ENCODE measurements at regions of chr16 and their contacts with region 1.

Region 1: GRCh38 chr16:81204798-81205680 is 33.5 kb upstream of the BCO1 start:
- DNase-seq: peak; percentile 27
- H3K4me3 ChIP-seq: no peak overlapping the region
- H3K27ac ChIP-seq: no peak overlapping the region
- H3K27me3 ChIP-seq: peaks cover 17% of the 10 kb centered on the region
- CTCF ChIP-seq: peak; percentile 86

Region 2: DNA sequence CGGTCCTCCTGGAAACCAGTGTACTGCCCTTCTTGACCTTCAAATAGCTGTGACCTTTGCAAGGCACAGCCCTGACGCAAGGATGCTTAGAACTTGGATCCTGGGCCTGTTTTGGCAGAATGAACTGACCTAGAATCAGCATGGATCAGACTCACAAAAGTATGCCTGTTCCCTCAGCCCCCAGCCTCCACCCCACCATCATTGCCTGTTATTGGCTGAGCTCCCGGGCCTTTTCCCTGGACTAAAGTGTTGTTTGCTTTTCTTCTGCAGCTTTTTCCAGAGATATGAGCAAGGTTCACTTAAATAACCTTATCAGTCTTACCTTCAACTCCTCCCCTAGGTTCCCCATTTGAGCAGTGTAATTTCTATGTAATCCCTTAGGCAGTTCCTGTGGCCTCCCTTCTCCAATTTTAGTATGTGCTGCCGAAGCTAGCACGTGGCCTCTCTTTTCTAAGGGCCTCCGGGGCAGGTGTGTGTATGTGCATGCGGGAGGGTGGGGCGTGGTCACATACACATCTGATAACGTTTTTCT is 1951.9 kb before region 1 on chr16:
- CTCF ChIA-PET with region 1: no interaction called
- POLR2A ChIA-PET with region 1: no interaction called
- DNase-seq: no peak
- H3K4me3 ChIP-seq: no peak overlapping the region
- H3K27ac ChIP-seq: no peak overlapping the region
- H3K27me3 ChIP-seq: no peaks in the 10 kb centered on the region
- CTCF ChIP-seq: no peak

Region 3: DNA sequence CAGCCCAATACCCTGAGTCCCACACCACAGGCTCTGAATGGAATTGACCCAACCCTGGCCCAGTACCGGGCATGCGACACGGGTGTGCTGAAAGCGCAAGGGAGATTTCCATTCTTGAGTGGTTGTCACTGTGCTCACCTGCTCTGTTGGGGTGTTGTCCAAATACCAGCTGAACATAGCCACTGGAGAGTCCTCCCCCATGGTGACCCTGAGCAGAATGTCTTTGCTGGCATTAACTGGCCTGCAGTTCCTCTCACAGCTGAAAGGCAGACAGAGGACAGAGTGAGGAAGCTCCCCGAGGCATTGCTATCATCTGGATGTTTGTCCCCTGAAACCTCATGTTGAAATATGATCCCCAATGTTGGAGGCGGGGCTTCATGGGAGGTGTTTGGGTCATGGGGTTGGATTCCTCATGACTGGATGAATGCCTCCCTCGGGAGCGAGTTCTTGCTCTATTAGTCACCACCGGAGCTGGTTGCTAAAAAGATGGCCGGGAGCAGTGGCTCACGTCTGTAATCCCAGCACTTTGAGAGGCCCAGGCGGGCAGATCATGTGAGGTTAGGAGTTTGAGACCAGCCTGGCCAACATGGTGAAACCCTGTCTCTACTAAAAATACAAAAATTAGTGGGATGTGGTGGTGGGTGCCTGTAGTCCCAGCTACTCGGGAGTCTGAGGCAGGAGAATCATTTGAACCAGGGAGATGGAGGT is 23.9 kb before region 1 on chr16:
- CTCF ChIA-PET with region 1: interaction called, 34 read pairs
- POLR2A ChIA-PET with region 1: interaction called, 5 read pairs
- DNase-seq: peak; percentile 89
- H3K4me3 ChIP-seq: peak overlapping the region; percentile 11
- H3K27ac ChIP-seq: peak overlapping the region; percentile 78
- H3K27me3 ChIP-seq: no peaks in the 10 kb centered on the region
- CTCF ChIP-seq: no peak

Region 4: DNA sequence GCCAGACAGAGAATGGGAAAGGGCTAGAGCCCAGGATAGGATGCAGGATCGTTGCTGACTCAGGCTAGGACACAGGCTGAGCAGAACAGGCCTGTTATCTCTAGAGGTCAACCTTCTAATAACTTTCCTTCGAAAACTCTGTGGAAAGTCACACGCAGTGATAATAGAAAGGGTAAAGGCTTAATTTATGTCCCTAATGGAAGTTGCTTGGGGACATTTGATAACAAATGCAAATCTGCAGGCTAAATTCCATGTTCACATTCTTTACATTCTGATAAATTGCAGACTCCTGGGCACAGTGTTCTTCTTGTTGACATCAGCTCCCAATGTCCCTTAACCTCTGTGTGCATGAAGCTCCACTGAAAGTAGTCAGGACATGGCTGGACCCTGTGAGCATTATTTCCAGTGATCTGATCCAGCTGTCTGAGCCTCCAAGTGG is 18.4 kb after region 1 on chr16:
- CTCF ChIA-PET with region 1: interaction called, 61 read pairs
- POLR2A ChIA-PET with region 1: no interaction called
- DNase-seq: no peak
- H3K4me3 ChIP-seq: no peak overlapping the region
- H3K27ac ChIP-seq: no peak overlapping the region
- H3K27me3 ChIP-seq: peaks cover 16% of the 10 kb centered on the region
- CTCF ChIP-seq: no peak

Region 5: DNA sequence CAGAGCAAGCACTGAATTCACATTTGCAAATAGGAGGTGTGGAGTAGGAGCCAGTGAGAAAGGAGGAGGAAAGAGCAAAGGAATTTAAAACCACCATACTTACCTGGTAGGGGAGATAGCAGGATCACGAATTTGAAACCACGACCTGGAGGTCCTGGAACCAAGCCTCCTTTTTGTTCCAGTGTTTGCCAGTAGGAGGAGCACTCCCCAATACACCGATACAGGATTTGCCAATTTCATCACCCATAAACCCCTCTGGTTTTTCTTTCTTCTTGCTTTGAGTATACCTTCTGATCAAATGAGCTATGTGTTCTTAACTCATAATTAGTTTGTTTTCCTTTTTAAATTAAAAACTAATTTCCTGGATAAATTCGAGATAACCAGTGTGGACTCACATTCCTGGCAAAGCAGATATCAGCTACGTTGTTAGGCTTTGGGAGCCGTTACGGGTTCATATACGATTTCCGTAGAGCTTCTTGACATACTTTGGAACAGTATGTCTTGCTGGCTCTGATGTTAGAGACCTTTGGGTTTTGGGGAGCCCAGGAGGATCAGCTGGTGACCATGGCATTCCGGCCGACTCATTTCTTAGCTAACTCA is 56.1 kb after region 1 on chr16:
- CTCF ChIA-PET with region 1: interaction called, 19 read pairs
- POLR2A ChIA-PET with region 1: no interaction called
- DNase-seq: no peak
- H3K4me3 ChIP-seq: no peak overlapping the region
- H3K27ac ChIP-seq: no peak overlapping the region
- H3K27me3 ChIP-seq: peaks cover 5% of the 10 kb centered on the region
- CTCF ChIP-seq: peak; percentile 67

Region 6: GRCh38 chr16:81737885-81738786 is 533.1 kb after region 1 on chr16:
- CTCF ChIA-PET with region 1: interaction called, 38 read pairs
- POLR2A ChIA-PET with region 1: no interaction called
- DNase-seq: no peak
- H3K4me3 ChIP-seq: peak overlapping the region; percentile 27; the same call in 1 of the 2 replicates
- H3K27ac ChIP-seq: no peak overlapping the region
- H3K27me3 ChIP-seq: peaks cover 10% of the 10 kb centered on the region
- CTCF ChIP-seq: peak; percentile 84